A673 (cell line): ENCODE measurements at regions of chr13 and their contacts with region 1.

Region 1: DNA sequence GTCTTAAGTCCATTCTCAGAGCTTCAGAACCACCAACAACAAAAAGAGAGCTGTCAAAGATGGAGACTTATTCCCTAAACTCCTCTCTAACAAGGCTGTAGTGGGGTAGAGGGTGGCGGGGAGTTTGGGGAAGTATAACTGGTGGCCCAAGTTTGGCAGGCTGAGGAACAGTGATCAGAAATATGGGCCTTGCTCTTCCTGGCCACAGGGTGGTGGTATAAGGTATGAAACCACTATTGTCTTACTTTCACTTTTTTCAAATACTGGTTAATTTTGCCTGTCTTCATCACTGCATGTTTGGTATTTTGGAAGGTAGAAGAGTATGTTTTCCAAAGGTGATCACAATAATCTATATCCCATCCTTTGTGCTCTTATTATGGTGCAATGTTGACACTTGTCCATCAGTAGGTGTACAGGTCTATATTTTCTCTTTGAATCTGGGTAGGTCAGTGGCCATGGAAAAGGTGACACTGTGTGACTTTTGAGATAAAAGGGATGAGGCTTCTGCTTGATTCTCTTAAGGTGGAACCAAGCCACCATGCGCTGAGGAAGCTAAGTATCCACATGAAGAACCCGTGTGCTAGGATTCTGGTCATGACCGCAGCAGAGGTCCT is 23.2 kb upstream of the GPC5 start:
- DNase-seq: peak; percentile 45
- H3K4me3 ChIP-seq: no peak overlapping the region
- H3K27ac ChIP-seq: no peak overlapping the region
- H3K4me1 ChIP-seq: no peaks in the 10 kb centered on the region
- H3K27me3 ChIP-seq: no peaks in the 10 kb centered on the region
- CTCF ChIP-seq: peak; percentile 64

Region 2: DNA sequence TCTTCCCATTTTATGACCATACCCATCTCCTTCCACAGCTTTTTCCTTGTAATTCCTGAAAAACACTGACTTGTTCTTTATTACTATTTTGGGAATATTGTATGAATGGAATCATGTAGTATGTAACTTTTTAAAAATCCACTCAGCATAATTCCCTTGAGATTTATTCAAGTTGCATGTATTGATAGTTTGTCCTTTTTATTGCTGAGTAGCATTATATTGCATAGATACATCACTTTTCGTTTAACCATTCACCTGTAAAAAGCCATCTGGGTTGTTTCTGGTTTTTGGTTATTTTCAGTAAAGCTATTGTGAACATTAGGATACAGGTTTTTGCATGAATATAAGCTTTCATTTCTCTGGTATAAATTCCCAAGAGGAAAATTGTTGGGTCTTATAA is 138.6 kb after region 1 on chr13:
- CTCF ChIA-PET with region 1: no interaction called
- POLR2A ChIA-PET with region 1: no interaction called
- intact Hi-C with region 1: no loop called
- DNase-seq: no peak
- H3K4me3 ChIP-seq: no peak overlapping the region
- H3K27ac ChIP-seq: no peak overlapping the region
- H3K4me1 ChIP-seq: no peaks in the 10 kb centered on the region
- H3K27me3 ChIP-seq: no peaks in the 10 kb centered on the region
- CTCF ChIP-seq: no peak

Region 3: GRCh38 chr13:91722267-91722884 is 347.2 kb after region 1 on chr13:
- CTCF ChIA-PET with region 1: no interaction called
- POLR2A ChIA-PET with region 1: no interaction called
- intact Hi-C with region 1: loop called (anchors 5 kb)
- DNase-seq: peak; percentile 48
- H3K4me3 ChIP-seq: no peak overlapping the region
- H3K27ac ChIP-seq: no peak overlapping the region
- H3K4me1 ChIP-seq: no peaks in the 10 kb centered on the region
- H3K27me3 ChIP-seq: no peaks in the 10 kb centered on the region
- CTCF ChIP-seq: peak; percentile 76

Region 4: DNA sequence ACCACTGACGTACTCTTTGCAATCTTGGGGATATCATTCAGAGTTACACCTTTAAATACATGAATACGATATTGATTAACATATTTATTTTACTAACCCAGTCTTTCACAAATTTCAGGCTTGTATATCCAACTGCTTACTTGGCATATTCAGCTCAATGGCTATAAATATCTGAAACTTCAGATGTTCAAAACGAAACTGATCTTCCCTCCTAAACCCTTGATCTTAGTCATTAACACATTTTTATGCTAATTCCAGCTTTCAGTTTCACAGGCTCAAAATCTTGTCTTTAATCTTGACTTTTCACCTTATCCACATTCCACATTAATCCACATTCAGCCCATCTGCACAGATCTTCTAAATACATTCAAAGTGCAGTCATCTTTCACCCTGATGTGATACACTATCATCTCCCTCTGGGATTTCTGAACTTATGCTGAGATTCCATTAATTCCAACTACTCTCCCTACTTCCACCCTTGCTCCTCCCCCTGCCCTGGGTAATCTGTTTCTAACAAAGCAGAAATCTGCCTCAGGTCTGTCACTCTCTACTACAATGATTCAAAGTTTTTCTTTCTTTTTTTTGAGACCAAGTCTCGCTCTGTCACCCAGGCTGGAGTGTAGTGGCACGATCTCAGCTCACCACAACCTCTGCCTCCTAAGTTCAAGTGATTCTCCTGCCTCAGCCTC is 410.4 kb after region 1 on chr13:
- CTCF ChIA-PET with region 1: no interaction called
- POLR2A ChIA-PET with region 1: no interaction called
- intact Hi-C with region 1: loop called (anchors 5 kb)
- DNase-seq: no peak
- H3K4me3 ChIP-seq: no peak overlapping the region
- H3K27ac ChIP-seq: no peak overlapping the region
- H3K4me1 ChIP-seq: peaks cover 4% of the 10 kb centered on the region
- H3K27me3 ChIP-seq: no peaks in the 10 kb centered on the region
- CTCF ChIP-seq: no peak